ENCODE measurements at regions of chr1 and their contacts with region 1.

Region 1: DNA sequence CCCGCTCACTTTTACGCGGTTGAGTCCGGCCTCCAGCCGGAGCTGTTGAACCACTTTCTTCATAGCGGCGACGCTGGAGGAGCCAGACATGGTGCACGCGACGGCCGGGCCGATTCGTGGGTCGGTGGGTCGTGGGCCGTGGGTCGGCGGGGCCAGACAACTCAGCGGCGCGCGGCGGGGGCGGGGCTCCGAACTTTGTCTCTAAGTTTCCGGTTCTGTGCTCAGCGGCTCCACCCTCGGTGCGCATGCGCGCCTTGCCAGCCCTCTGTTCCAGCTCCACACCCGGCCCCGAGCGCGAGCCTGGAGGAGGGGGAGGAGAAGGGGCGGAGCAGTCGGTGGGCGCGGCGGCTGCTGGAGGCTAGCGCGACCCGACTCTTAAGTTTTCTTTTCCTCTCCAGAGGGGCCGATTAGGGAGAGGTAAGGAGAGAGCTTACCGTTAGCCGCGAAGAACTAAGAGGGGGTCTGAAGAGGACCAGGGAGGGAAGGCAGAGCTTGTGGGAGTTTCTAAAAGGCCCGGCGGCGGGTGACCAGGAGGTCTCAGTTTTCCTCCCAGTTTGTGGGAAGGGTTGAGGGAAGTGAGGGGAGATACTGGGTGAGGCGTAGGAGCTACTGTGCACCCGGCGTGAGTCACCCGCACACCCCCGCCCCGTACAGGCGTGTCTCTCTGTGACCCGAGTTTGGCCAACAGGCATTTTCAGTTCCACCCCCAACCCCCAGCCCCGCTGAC is at the starts of genes GNG5 and SPATA1:
- DNase-seq: peak; percentile 92 to 99 (median 94)

Region 2: GRCh38 chr1:84133479-84133878 is 372.7 kb before region 1 on chr1:
- intact Hi-C with region 1: loop called (anchors 10 kb)
- DNase-seq: peak in 2 of 10 donors; percentile 41 to 43